Heart right ventricle (tissue), 16 donors: ENCODE measurements at regions of chr3 and their contacts with region 1.

Region 1: GRCh38 chr3:119637679-119638525 is 22.5 kb downstream of the POPDC2 start:
- DNase-seq: no peak
- ATAC-seq: peak; percentile 25 to 76 (median 51)
- H3K4me3 ChIP-seq: peak overlapping the region in 4 of 10 donors; percentile 4 to 14 (median 10)
- H3K27ac ChIP-seq: peak overlapping the region; percentile 71 to 94 (median 88)
- H3K4me1 ChIP-seq: peaks cover 12 to 68% (median 56%) of the 10 kb centered on the region in 9 donors
- H3K27me3 ChIP-seq: no peaks in the 10 kb centered on the region
- CTCF ChIP-seq: no peak

Region 2: DNA sequence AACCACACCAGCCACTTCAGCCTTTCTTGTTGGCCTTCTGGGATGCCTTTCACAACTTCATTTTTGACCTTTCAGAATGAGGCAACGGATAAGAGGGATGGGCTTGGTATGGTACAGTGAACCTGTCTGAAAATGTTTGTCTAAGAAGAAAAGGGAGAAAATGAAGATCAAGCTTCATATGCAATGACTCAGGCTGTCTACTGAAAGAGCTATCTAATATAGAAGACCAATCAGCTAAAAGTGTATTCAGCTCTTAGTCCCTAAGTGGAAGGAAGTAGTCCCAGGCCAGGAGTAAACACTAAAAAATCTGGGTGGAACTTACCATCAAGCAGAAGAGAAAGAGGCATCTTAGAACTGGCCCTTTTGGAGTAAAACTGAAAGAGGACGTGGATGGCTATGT is 476.7 kb before region 1 on chr3:
- intact Hi-C with region 1: no loop called
- DNase-seq: no peak
- ATAC-seq: no peak
- H3K4me3 ChIP-seq: no peak overlapping the region
- H3K27ac ChIP-seq: no peak overlapping the region
- H3K4me1 ChIP-seq: no peaks in the 10 kb centered on the region
- H3K27me3 ChIP-seq: no peaks in the 10 kb centered on the region
- CTCF ChIP-seq: no peak

Region 3: GRCh38 chr3:119604878-119605277 is 33.0 kb before region 1 on chr3:
- intact Hi-C with region 1: no loop called
- DNase-seq: no peak
- ATAC-seq: no peak
- H3K4me3 ChIP-seq: no peak overlapping the region
- H3K27ac ChIP-seq: no peak overlapping the region
- H3K4me1 ChIP-seq: peaks cover 0 to 29% (median 18%) of the 10 kb centered on the region in 9 donors
- H3K27me3 ChIP-seq: no peaks in the 10 kb centered on the region
- CTCF ChIP-seq: no peak

Region 4: GRCh38 chr3:119669906-119670570 is 32.1 kb after region 1 on chr3:
- intact Hi-C with region 1: loop called in 2 of 10 experiments (anchors 5 kb)
- DNase-seq: no peak
- ATAC-seq: peak in 1 of 8 donors; percentile 8
- H3K4me3 ChIP-seq: no peak overlapping the region
- H3K27ac ChIP-seq: peak overlapping the region in 9 of 10 donors; percentile 33 to 98 (median 58)
- H3K4me1 ChIP-seq: peaks cover 3 to 57% (median 35%) of the 10 kb centered on the region in 9 donors
- H3K27me3 ChIP-seq: no peaks in the 10 kb centered on the region
- CTCF ChIP-seq: no peak